Activated CD8-positive, alpha-beta T cell treated with anti-CD3 and anti-CD28 coated beads, Interleukin-2, amount 10 ng/mL, durations not matched to agents 7 days and 5 days (primary cell): ENCODE measurements at regions of chr21 and their contacts with region 1.

Region 1: GRCh38 chr21:44792702-44793591 is 8.7 kb downstream of the UBE2G2 start:
- DNase-seq: peak; percentile 62
- ATAC-seq: peak; percentile 95
- H3K4me3 Mint-ChIP-seq: no peak overlapping the region
- H3K27ac Mint-ChIP-seq: peak overlapping the region; percentile 20
- H3K4me1 Mint-ChIP-seq: peaks cover 37% of the 10 kb centered on the region
- H3K27me3 Mint-ChIP-seq: no peaks in the 10 kb centered on the region

Region 2: GRCh38 chr21:44414291-44415072 is 378.5 kb before region 1 on chr21:
- CTCF ChIA-PET with region 1: no interaction called
- POLR2A ChIA-PET with region 1: no interaction called
- DNase-seq: no peak
- ATAC-seq: no peak
- H3K4me3 Mint-ChIP-seq: no peak overlapping the region
- H3K27ac Mint-ChIP-seq: no peak overlapping the region
- H3K4me1 Mint-ChIP-seq: no peaks in the 10 kb centered on the region
- H3K27me3 Mint-ChIP-seq: no peaks in the 10 kb centered on the region

Region 3: GRCh38 chr21:44495611-44496563 is 297.1 kb before region 1 on chr21:
- CTCF ChIA-PET with region 1: interaction called, 14 read pairs
- POLR2A ChIA-PET with region 1: no interaction called
- DNase-seq: no peak
- ATAC-seq: no peak
- H3K4me3 Mint-ChIP-seq: no peak overlapping the region
- H3K27ac Mint-ChIP-seq: no peak overlapping the region
- H3K4me1 Mint-ChIP-seq: peaks cover 8% of the 10 kb centered on the region
- H3K27me3 Mint-ChIP-seq: peaks cover 7% of the 10 kb centered on the region

Region 4: GRCh38 chr21:44547656-44548331 is 245.2 kb before region 1 on chr21:
- CTCF ChIA-PET with region 1: interaction called, 12 read pairs
- POLR2A ChIA-PET with region 1: no interaction called
- DNase-seq: peak; percentile 57
- ATAC-seq: peak; percentile 81
- H3K4me3 Mint-ChIP-seq: peak overlapping the region; percentile 62
- H3K27ac Mint-ChIP-seq: peak overlapping the region; percentile 87
- H3K4me1 Mint-ChIP-seq: peaks cover 21% of the 10 kb centered on the region
- H3K27me3 Mint-ChIP-seq: no peaks in the 10 kb centered on the region

Region 5: DNA sequence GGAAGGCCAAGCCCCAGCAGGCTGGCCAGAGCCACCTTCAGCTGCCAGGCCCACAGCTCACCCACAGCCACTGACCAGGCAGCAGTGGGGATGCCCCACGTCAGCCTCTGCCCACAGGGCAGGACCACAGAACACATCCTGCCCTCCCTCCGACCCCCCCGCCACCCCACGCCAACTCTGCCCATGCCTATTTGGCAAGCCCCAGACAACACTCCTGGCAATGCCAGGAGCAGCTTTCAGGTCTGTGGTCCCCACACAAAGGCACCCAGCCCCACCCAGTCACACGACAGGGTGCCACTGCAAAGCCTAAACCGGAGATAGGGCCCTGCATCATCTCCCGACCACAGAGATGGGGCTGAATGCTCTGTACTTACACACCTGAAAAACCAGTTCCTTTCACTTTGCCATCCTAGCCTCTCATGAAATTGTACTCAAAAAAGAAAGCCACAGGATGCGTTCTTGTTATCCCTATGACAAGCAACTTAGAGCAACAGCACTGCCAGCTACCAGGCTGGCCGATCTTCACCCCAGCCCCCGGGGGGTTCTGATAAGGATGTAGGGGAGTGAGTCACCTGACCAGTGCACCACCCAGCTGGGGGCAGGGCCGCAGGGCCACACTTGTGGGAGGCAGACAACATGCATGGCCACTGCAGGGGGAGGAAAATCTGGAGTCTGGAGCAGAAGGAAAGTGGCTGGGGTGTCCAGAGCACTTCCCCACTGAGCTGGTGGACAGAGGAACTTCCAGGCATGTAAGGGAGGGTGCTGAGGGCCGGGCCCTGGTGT is 27.5 kb before region 1 on chr21:
- CTCF ChIA-PET with region 1: interaction called, 20 read pairs
- POLR2A ChIA-PET with region 1: no interaction called
- DNase-seq: peak; percentile 75
- ATAC-seq: peak; percentile 87
- H3K4me3 Mint-ChIP-seq: peak overlapping the region; percentile 63
- H3K27ac Mint-ChIP-seq: peak overlapping the region; percentile 92
- H3K4me1 Mint-ChIP-seq: peaks cover 29% of the 10 kb centered on the region
- H3K27me3 Mint-ChIP-seq: no peaks in the 10 kb centered on the region

Region 6: DNA sequence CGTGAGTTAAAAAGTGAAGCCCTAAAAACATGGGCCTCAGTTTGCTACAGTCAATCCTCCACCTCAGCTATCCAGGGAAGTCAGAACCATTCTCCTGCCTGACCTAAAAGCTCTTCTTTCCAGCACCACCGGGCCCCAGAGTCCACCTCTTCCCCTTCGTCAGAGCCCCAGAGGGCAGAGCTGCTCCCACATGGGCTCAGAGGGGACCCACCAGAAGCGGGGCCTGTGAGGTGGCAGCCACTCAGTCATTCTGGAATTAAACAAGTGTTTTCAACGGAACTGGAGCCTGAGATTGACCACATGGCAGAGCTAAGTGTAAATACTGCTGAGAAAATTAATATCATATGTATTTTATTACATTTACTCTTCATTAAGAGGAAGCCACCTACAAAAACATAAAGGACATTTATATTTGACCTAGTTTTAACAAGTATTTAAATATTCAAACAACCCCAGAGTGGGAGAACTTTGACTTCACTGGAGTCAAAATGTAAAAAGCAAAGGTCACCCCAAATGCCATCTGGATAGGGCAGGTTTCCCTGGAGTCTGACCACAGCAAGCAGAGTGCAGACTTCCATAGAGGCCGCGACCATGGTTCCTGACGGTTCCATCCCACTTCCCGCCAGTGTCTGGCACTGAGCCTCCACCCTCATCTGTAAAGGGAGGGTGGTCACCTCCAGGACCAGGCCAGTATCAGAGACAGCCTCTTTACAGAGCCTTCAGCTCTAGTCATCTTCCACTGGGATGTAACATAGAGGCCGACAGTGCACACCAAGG is 23.1 kb after region 1 on chr21:
- CTCF ChIA-PET with region 1: interaction called, 10 read pairs
- POLR2A ChIA-PET with region 1: no interaction called
- DNase-seq: no peak
- ATAC-seq: no peak
- H3K4me3 Mint-ChIP-seq: peak overlapping the region; percentile 72
- H3K27ac Mint-ChIP-seq: no peak overlapping the region
- H3K4me1 Mint-ChIP-seq: peaks cover 32% of the 10 kb centered on the region
- H3K27me3 Mint-ChIP-seq: peaks cover 2% of the 10 kb centered on the region

Region 7: DNA sequence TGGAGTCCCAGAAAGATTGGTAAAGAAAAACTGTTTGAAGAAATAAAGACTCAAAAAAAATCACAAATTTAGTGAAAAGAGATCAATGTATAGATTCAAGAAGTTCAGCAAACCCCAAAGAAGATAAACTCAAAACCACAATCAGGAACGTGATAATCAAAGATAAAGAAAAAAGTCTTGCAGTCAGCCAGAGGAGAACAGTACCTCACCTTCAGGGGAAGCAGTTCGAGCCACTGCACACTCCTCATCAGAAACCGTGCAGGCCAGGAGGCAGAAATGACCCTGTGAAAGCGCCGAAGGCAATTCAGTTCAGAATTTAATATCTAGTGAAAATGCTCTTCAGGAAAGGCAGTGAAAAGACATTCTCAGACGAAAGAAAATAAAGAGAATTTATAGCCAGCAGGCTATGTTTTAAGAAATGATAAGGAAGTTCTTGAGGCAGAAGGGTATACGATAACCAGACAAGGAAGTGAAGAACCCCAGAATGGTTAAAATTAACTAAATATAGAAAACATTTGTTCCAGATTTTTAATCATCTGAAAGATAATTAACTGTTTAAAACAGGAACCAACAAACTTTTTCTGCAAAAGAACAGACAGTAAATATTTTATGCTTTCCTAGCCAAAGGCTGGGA is 38.4 kb after region 1 on chr21:
- CTCF ChIA-PET with region 1: no interaction called
- POLR2A ChIA-PET with region 1: no interaction called
- DNase-seq: no peak
- ATAC-seq: no peak
- H3K4me3 Mint-ChIP-seq: no peak overlapping the region
- H3K27ac Mint-ChIP-seq: no peak overlapping the region
- H3K4me1 Mint-ChIP-seq: peaks cover 6% of the 10 kb centered on the region
- H3K27me3 Mint-ChIP-seq: peaks cover 14% of the 10 kb centered on the region